ENCODE measurements at regions of chr5 and their contacts with region 1.

Region 1: GRCh38 chr5:74035521-74035981 is 409.6 kb downstream of the ARHGEF28 start:
- DNase-seq: peak; percentile 69
- ATAC-seq: peak; percentile 61
- H3K4me3 ChIP-seq: no peak overlapping the region
- H3K27ac ChIP-seq: no peak overlapping the region
- H3K4me1 ChIP-seq: no peaks in the 10 kb centered on the region; the same call in 1 of the 2 replicates
- H3K27me3 ChIP-seq: peaks cover 6% of the 10 kb centered on the region
- CTCF ChIP-seq: peak; percentile 48
- POLR2A ChIP-seq: no peak
- RAD21 ChIP-seq: peak; percentile 65

Region 2: GRCh38 chr5:73902327-73903051 is 133.1 kb before region 1 on chr5:
- CTCF ChIA-PET with region 1: no interaction called
- POLR2A ChIA-PET with region 1: no interaction called
- dilution Hi-C with region 1: no loop called
- in situ Hi-C with region 1: no loop called
- intact Hi-C with region 1: loop called (anchors 1 kb)
- DNase-seq: peak; percentile 77
- ATAC-seq: peak; percentile 63
- H3K4me3 ChIP-seq: no peak overlapping the region
- H3K27ac ChIP-seq: no peak overlapping the region
- H3K4me1 ChIP-seq: peaks cover 4% of the 10 kb centered on the region
- H3K27me3 ChIP-seq: no peaks in the 10 kb centered on the region
- CTCF ChIP-seq: peak; percentile 80
- POLR2A ChIP-seq: no peak
- RAD21 ChIP-seq: peak; percentile 81

Region 3: DNA sequence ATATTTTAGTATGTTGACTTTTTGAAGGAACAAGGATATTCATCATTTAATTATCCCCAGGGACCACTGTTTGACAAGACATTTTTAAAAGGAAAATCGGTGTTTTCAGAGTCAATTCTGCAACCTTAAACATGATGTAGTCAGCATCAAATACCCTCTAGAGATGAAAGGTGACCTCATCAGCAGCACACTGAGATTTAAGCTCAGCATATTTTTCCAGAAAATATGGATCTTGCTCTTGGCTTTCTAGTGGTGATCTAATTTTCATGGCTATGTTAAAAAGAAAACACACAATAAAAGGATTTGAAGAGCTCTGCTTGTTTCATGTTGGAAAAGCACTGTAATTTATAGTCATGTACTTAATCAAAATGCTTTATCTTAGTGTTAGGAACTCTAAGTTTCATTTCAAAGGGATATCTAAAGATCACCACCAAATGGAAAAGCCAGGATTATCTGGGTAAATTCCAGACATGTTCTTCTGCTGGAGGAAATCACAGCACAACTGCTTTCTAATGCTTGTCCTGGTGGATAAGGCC is 117.8 kb after region 1 on chr5:
- CTCF ChIA-PET with region 1: no interaction called
- POLR2A ChIA-PET with region 1: no interaction called
- dilution Hi-C with region 1: no loop called
- in situ Hi-C with region 1: no loop called
- intact Hi-C with region 1: loop called (anchors 5 kb)
- DNase-seq: no peak
- ATAC-seq: no peak
- H3K4me3 ChIP-seq: no peak overlapping the region
- H3K27ac ChIP-seq: no peak overlapping the region
- H3K4me1 ChIP-seq: no peaks in the 10 kb centered on the region
- H3K27me3 ChIP-seq: peaks cover 1% of the 10 kb centered on the region; the same call in 1 of the 2 replicates
- CTCF ChIP-seq: no peak
- POLR2A ChIP-seq: no peak
- RAD21 ChIP-seq: no peak

Region 4: GRCh38 chr5:74251141-74252035 is 215.8 kb after region 1 on chr5:
- CTCF ChIA-PET with region 1: no interaction called
- POLR2A ChIA-PET with region 1: no interaction called
- dilution Hi-C with region 1: no loop called
- in situ Hi-C with region 1: no loop called
- intact Hi-C with region 1: loop called (anchors 10 kb)
- DNase-seq: peak; percentile 96
- ATAC-seq: peak; percentile 93
- H3K4me3 ChIP-seq: no peak overlapping the region
- H3K27ac ChIP-seq: peak overlapping the region; percentile 6
- H3K4me1 ChIP-seq: peaks cover 6% of the 10 kb centered on the region
- H3K27me3 ChIP-seq: no peaks in the 10 kb centered on the region
- CTCF ChIP-seq: no peak
- POLR2A ChIP-seq: no peak
- RAD21 ChIP-seq: peak; percentile 10